ENCODE measurements at regions of chr6 and their contacts with region 1.

Region 1: DNA sequence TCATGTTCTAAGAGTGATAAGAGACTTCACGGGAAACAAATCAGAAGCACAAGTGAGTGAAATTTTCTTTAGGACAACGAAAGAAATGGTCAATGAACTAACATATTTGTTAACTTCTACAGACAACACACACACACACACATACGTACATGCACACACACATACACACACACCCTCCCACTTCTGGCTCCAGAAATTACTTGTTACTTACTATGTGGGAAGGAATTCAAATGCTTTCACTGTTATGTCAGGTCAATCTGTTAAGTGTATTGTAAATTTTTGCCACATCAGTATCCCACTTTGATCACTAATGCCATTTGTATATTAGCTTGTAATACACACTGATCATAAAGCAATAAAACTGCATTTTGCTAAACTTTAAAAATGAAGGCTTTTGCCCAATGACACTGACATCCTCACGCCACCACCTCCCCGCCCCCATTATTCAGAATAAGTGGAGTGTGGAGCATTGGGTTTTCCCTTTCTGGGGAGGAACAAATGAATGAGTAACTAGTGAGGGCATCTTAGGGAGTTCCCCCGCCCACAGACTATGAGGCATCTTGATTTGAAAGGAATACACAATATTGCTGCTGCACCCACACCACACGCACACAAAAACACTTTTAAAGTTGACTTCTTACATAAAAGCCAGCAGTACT is 76.2 kb downstream of the ATXN1 start:
- DNase-seq: no peak
- ATAC-seq: no peak
- H3K4me3 ChIP-seq: no peak overlapping the region; a peak in 1 of 6 replicates
- H3K27ac ChIP-seq: peak overlapping the region; percentile 58
- H3K4me1 ChIP-seq: peaks cover 66% of the 10 kb centered on the region
- H3K27me3 ChIP-seq: no peaks in the 10 kb centered on the region
- CTCF ChIP-seq: no peak
- EP300 ChIP-seq: no peak
- POLR2A ChIP-seq: no peak
- RAD21 ChIP-seq: no peak

Region 2: GRCh38 chr6:16585805-16586204 is 99.2 kb before region 1 on chr6:
- CTCF ChIA-PET with region 1: no interaction called
- POLR2A ChIA-PET with region 1: no interaction called
- in situ Hi-C with region 1: no loop called
- intact Hi-C with region 1: loop called (anchors 5 kb)
- DNase-seq: no peak
- ATAC-seq: peak; percentile 57
- H3K4me3 ChIP-seq: peak overlapping the region in 1 of 3 experiments; percentile 5; a peak in 1 of 6 replicates
- H3K27ac ChIP-seq: peak overlapping the region; percentile 68
- H3K4me1 ChIP-seq: peaks cover 36% of the 10 kb centered on the region
- H3K27me3 ChIP-seq: no peaks in the 10 kb centered on the region
- CTCF ChIP-seq: no peak
- EP300 ChIP-seq: no peak
- POLR2A ChIP-seq: no peak
- RAD21 ChIP-seq: no peak

Region 3: GRCh38 chr6:16700202-16700915 is 15.3 kb after region 1 on chr6:
- CTCF ChIA-PET with region 1: no interaction called
- POLR2A ChIA-PET with region 1: interaction called, 21 read pairs
- in situ Hi-C with region 1: no loop called
- intact Hi-C with region 1: no loop called
- DNase-seq: no peak
- ATAC-seq: no peak; the same call in 2 of the 3 replicates
- H3K4me3 ChIP-seq: no peak overlapping the region; a peak in 1 of 6 replicates
- H3K27ac ChIP-seq: peak overlapping the region; percentile 71
- H3K4me1 ChIP-seq: peaks cover 61% of the 10 kb centered on the region
- H3K27me3 ChIP-seq: no peaks in the 10 kb centered on the region
- CTCF ChIP-seq: no peak
- EP300 ChIP-seq: no peak
- POLR2A ChIP-seq: no peak
- RAD21 ChIP-seq: no peak

Region 4: DNA sequence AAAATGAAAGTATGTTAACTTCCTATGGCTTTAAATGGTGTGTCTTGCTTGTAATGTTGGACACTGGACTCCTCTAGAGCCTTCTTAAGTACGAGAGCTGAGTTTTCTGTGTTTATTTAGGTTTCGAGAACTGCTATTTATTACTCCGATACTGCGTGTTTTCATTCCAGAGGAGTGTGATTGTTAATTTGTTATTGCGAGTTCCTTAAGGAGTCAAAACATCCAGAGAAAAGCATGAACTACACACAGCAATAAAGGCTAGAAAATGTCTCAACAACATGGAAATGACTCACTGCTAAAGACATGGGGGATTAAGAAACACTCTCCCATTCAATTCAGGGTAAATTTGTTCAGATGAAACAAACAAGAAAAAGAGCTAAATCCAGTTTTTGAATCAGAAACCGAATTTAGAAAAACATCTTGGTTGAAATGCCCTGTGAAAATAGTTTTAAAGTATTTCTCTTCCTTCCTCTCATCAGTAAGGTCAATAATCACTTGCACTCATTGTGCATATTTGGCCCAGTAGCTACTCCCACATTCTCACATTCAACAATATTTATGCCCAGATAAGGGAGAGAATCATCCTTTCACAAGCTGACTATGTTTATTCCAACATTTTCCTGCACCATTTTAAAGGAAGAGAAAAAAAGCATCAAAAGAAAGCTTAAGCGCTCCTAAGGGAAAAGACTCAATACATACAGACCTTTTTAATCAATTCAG is 40.3 kb after region 1 on chr6:
- CTCF ChIA-PET with region 1: no interaction called
- POLR2A ChIA-PET with region 1: interaction called, 7 read pairs
- in situ Hi-C with region 1: loop called (anchors 5 kb)
- intact Hi-C with region 1: loop called (anchors 2 kb)
- DNase-seq: no peak
- ATAC-seq: no peak
- H3K4me3 ChIP-seq: no peak overlapping the region
- H3K27ac ChIP-seq: peak overlapping the region; percentile 32
- H3K4me1 ChIP-seq: peaks cover 87% of the 10 kb centered on the region
- H3K27me3 ChIP-seq: no peaks in the 10 kb centered on the region
- CTCF ChIP-seq: no peak
- EP300 ChIP-seq: no peak
- POLR2A ChIP-seq: no peak
- RAD21 ChIP-seq: no peak

Region 5: DNA sequence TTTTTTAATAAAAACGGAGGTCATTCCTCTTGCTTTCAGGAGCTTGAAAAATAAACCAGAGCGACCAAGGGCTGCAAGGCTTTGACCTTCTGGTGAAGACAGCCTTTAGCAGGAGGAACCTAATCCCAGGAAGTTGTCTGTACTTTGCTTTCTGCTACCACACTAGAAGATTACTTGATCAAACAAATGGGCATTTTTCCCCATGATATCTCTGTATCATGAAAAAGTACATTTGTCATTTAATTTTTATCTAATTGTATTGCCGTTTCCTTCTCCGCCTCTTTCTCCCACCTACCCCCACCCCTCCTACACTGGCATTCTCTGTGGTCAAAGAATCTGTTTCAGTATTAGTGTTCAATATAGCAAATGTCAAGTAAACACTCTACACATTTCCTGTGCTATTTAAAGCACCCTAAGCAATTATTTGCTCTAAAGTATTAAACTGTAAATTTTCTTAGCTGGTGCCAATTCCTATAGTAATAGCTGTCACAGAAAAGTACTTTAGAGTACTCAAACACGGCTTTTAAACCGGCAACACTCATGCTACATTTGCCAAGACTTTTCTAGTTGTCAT is 46.5 kb after region 1 on chr6:
- CTCF ChIA-PET with region 1: no interaction called
- POLR2A ChIA-PET with region 1: interaction called, 7 read pairs
- in situ Hi-C with region 1: loop called (anchors 5 kb)
- intact Hi-C with region 1: loop called (anchors 2 kb)
- DNase-seq: no peak
- ATAC-seq: no peak
- H3K4me3 ChIP-seq: no peak overlapping the region
- H3K27ac ChIP-seq: peak overlapping the region; percentile 56
- H3K4me1 ChIP-seq: peaks cover 98% of the 10 kb centered on the region
- H3K27me3 ChIP-seq: no peaks in the 10 kb centered on the region
- CTCF ChIP-seq: no peak
- EP300 ChIP-seq: no peak
- POLR2A ChIP-seq: no peak
- RAD21 ChIP-seq: no peak

Region 6: GRCh38 chr6:17045581-17046326 is 360.7 kb after region 1 on chr6:
- CTCF ChIA-PET with region 1: no interaction called
- POLR2A ChIA-PET with region 1: no interaction called
- in situ Hi-C with region 1: no loop called
- intact Hi-C with region 1: no loop called
- DNase-seq: no peak
- ATAC-seq: no peak
- H3K4me3 ChIP-seq: no peak overlapping the region
- H3K27ac ChIP-seq: no peak overlapping the region
- H3K4me1 ChIP-seq: no peaks in the 10 kb centered on the region
- H3K27me3 ChIP-seq: no peaks in the 10 kb centered on the region; a peak in 1 of 5 replicates
- CTCF ChIP-seq: no peak
- EP300 ChIP-seq: no peak
- POLR2A ChIP-seq: no peak
- RAD21 ChIP-seq: no peak